ENCODE measurements at regions of chr21 and their contacts with region 1.

Region 1: DNA sequence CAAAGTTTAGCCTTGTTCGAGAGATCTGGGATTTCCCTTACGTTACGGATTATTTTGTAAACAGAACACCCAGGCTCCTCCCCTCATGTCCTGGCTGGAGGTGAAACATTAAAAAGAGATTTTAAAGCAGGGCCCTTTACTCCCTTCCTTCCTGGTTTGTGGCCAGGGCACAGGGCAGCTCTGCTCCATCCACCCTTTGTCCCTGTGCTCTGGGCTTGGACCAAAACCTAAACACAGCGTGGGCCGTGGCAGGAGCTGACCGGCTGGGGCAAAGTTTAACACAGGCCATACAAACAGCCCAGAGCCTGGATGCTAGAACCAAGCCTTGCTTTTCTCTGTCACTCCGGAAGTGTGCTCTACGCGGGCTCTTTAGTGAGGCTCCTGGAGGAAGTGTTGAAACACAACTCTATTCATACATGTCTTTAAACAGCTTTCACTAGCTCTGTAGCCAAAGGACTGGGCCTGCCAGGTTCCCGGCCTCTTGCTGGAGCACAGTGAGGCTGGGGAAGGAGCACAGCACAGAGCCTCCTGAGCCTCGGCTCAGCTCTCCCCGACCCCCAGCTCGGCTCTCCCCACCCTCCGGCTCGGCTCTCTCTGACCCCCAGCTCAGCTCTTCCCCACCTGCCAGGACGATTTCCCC is 84.7 kb downstream of the PDE9A start:
- DNase-seq: peak; percentile 89
- ATAC-seq: peak; percentile 88
- H3K4me3 ChIP-seq: peak overlapping the region in 1 of 3 experiments; percentile 58; a peak in 3 of 6 replicates
- H3K27ac ChIP-seq: peak overlapping the region; percentile 96
- H3K4me1 ChIP-seq: peaks cover 83% of the 10 kb centered on the region
- H3K27me3 ChIP-seq: no peaks in the 10 kb centered on the region
- CTCF ChIP-seq: no peak
- EP300 ChIP-seq: peak in 1 of 2 experiments; percentile 65; a peak in 2 of 4 replicates
- POLR2A ChIP-seq: peak; percentile 39 to 46; a peak in 2 of 4 replicates
- RAD21 ChIP-seq: no peak; the same call in 1 of the 2 replicates

Region 2: DNA sequence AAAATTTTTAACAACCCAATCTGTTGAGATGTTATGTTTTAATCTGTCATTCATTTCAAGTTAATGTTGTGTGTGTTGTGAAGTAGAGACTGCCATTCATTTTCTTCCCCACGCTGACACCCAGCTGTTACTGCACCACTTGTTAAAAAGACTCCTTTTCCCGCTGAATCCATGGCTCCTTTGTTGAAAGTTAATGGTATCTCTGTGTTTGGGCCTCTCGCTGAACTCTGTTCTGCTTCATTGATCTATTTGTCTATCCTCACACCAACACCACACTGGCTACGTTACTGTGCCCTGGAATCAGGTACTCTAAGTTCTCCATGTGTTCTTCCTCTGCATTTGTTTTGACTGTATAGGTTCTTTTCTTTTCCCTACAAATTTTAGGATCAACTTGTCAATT is 26.4 kb before region 1 on chr21:
- CTCF ChIA-PET with region 1: no interaction called
- POLR2A ChIA-PET with region 1: interaction called, 7 read pairs
- in situ Hi-C with region 1: no loop called
- intact Hi-C with region 1: loop called (anchors 1 kb)
- DNase-seq: peak; percentile 90
- ATAC-seq: peak; percentile 95
- H3K4me3 ChIP-seq: no peak overlapping the region
- H3K27ac ChIP-seq: peak overlapping the region; percentile 77
- H3K4me1 ChIP-seq: peaks cover 58% of the 10 kb centered on the region
- H3K27me3 ChIP-seq: no peaks in the 10 kb centered on the region
- CTCF ChIP-seq: 0 out of 2 replicates have a peak, but pooled peaks have one; percentile 14
- EP300 ChIP-seq: peak in 1 of 2 experiments; percentile 86; a peak in 2 of 4 replicates
- POLR2A ChIP-seq: no peak
- RAD21 ChIP-seq: no peak

Region 3: GRCh38 chr21:42724226-42724920 is 13.7 kb before region 1 on chr21:
- CTCF ChIA-PET with region 1: no interaction called
- POLR2A ChIA-PET with region 1: interaction called, 4 read pairs
- in situ Hi-C with region 1: no loop called
- intact Hi-C with region 1: loop called (anchors 1 kb)
- DNase-seq: peak; percentile 91
- ATAC-seq: peak; percentile 91
- H3K4me3 ChIP-seq: no peak overlapping the region
- H3K27ac ChIP-seq: peak overlapping the region; percentile 63
- H3K4me1 ChIP-seq: peaks cover 58% of the 10 kb centered on the region
- H3K27me3 ChIP-seq: no peaks in the 10 kb centered on the region
- CTCF ChIP-seq: no peak
- EP300 ChIP-seq: peak in 1 of 2 experiments; percentile 65; a peak in 2 of 4 replicates
- POLR2A ChIP-seq: no peak
- RAD21 ChIP-seq: 0 out of 2 replicates have a peak, but pooled peaks have one; percentile 30

Region 4: GRCh38 chr21:42760951-42761680 is 23.0 kb after region 1 on chr21:
- CTCF ChIA-PET with region 1: no interaction called
- POLR2A ChIA-PET with region 1: interaction called, 26 read pairs
- in situ Hi-C with region 1: no loop called
- intact Hi-C with region 1: no loop called
- DNase-seq: peak; percentile 66
- ATAC-seq: peak; percentile 77
- H3K4me3 ChIP-seq: peak overlapping the region in 1 of 3 experiments; percentile 17; a peak in 1 of 6 replicates
- H3K27ac ChIP-seq: peak overlapping the region; percentile 81
- H3K4me1 ChIP-seq: peaks cover 43% of the 10 kb centered on the region
- H3K27me3 ChIP-seq: no peaks in the 10 kb centered on the region
- CTCF ChIP-seq: 0 out of 2 replicates have a peak, but pooled peaks have one; percentile 16
- EP300 ChIP-seq: peak in 1 of 2 experiments; percentile 37; a peak in 1 of 4 replicates
- POLR2A ChIP-seq: no peak; a peak in 1 of 4 replicates
- RAD21 ChIP-seq: no peak

Region 5: GRCh38 chr21:42781150-42781970 is 43.3 kb after region 1 on chr21:
- CTCF ChIA-PET with region 1: no interaction called
- POLR2A ChIA-PET with region 1: interaction called, 6 read pairs
- in situ Hi-C with region 1: no loop called
- intact Hi-C with region 1: loop called (anchors 10 kb)
- DNase-seq: peak; percentile 32
- ATAC-seq: peak; percentile 56
- H3K4me3 ChIP-seq: peak overlapping the region; percentile 48 to 72 (median 57)
- H3K27ac ChIP-seq: peak overlapping the region; percentile 52
- H3K4me1 ChIP-seq: peaks cover 60% of the 10 kb centered on the region
- H3K27me3 ChIP-seq: peaks cover 0 to 9% of the 10 kb centered on the region in 2 experiments; a peak in 1 of 5 replicates
- CTCF ChIP-seq: peak; percentile 60
- EP300 ChIP-seq: no peak
- POLR2A ChIP-seq: no peak
- RAD21 ChIP-seq: no peak